AG04449 (cell line): ENCODE measurements at regions of chr12 and their contacts with region 1.

Region 1: DNA sequence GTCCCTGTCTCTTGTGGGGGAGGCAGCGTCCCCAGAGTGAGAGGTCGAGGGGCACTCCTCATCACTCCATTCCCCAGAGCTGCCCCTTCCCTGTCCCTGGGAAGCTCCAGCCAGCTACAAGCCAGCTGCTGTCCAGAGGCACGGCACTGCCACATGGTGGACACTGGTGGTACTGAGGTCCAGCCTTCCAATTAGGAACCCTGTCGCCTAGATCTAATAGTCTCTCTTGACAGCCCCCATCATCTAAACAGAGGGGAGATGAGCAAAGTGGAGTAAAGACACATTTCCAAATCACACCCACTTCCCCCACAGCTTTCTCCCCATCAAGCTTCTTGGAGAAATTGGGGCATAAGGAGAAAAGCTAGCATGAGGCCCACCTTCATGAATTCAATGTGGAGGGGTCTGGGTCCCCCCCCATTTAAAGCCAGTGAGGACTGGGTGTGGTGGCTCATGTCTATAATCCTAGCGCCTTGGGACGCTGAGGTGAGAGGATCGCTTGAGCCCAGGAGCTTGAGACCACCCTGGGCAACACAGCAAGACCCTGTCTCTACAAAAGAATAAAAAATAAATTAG is 2.1 kb upstream of the INHBE start:
- DNase-seq: no peak
- H3K4me3 ChIP-seq: no peak overlapping the region
- CTCF ChIP-seq: peak; percentile 94

Region 2: DNA sequence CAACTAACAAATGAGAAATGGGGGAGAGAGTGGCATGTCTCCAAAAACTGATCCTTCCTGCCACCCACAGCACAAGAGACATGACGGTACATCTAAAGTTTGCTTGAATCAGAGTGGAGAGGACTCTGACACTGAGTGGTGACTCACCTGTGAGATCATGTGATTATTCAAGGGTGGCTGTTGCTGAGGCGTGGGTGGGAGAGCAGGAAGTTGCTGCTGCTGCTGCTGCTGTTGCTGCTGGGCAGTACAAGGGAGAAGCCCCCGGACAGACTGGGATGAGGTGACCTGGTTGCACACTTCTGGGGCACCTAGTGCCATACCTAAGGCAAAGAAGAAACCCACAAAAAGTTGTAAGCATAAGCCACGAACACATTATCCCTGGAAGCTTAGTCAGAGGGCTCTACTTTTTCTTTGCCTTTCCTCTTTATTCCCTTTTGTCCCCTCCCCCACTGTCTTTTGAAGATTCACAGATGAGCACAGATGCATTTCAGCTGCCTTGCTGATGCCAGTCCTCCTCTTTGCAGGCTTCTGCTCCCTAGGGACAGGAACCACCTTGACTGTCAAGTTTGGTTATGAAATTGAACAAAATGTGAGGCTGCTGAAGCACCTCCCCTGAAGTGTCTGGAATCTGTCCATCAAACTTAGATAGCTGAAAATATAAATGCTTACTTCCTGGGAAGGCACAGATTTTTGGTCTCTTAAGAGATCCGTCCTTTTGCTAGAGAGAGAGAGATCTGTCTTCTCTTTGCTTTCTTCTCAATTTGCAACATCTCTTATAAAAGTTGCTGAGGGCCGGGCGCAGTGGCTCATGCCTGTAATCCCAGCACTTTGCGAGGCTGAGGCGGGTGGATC is 172.6 kb before region 1 on chr12:
- CTCF ChIA-PET with region 1: interaction called, 52 read pairs
- POLR2A ChIA-PET with region 1: no interaction called
- DNase-seq: peak; percentile 79
- H3K4me3 ChIP-seq: no peak overlapping the region
- CTCF ChIP-seq: no peak

Region 3: DNA sequence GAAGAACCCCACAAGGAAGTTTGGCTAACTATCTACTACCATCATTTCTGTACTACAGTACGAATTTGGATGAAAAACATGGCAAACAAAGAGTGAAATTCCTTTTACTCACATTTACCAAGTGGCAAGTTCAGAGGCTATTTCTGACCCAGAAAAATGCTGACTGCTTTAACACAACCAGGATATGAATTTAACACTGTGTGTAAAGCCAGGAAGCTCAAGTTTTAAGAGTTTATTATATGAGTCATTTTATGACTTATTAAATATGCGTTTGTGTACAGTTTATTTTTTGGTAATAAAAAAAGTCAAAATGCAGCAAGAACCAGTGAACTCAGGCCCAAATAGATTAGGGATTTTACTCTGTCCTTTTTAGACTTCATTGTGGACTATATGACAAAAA is 143.6 kb before region 1 on chr12:
- CTCF ChIA-PET with region 1: interaction called, 449 read pairs
- POLR2A ChIA-PET with region 1: interaction called, 6 read pairs
- DNase-seq: peak; percentile 9
- H3K4me3 ChIP-seq: no peak overlapping the region
- CTCF ChIP-seq: no peak

Region 4: GRCh38 chr12:57319678-57320469 is 133.1 kb before region 1 on chr12:
- CTCF ChIA-PET with region 1: interaction called, 33 read pairs
- POLR2A ChIA-PET with region 1: no interaction called
- DNase-seq: no peak
- H3K4me3 ChIP-seq: no peak overlapping the region
- CTCF ChIP-seq: no peak

Region 5: DNA sequence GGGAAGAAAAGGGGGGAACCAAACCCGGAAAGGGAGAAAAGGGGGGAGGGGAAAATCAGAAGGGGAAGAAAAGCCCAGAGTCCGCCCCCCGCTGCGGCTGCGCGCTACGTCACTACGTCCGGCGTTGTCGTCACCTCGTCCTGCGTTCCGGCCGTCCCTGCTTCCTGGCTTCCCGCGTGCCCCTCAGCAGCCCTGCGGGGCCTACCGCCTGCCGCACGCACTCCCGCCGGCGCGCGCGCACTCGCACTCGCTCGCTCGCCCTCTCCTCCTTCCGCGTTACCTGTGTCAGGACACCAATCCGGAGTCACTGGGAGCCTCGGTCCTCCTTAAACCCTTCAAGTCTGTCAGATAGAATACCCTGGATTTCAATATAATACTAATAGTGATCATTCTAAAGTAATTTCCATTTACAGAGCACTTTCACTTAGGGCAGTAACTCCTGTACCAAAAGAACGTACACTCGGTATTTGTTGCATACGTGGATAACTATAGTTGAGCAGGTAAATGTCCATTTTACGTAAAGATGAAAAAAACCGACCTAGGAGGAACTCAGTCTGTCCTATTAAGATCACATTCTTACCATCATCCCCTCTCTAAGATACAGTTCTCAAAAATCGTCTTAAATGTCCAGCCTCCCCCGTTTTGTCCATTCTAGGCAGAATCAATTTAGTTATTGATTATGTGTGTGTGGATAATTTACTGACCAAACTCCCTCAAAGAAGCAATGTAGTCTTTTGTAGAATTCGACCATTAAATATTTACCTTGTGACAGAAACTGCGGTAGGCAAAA is 21.9 kb before region 1 on chr12 and contains the start of gene R3HDM2:
- CTCF ChIA-PET with region 1: interaction called, 46 read pairs
- POLR2A ChIA-PET with region 1: interaction called, 5 read pairs
- DNase-seq: peak; percentile 57
- H3K4me3 ChIP-seq: peak within 1 kb of the TSS; percentile 65
- CTCF ChIP-seq: peak; percentile 22

Region 6: GRCh38 chr12:57441846-57442427 is 11.1 kb before region 1 on chr12:
- CTCF ChIA-PET with region 1: interaction called, 71 read pairs
- POLR2A ChIA-PET with region 1: no interaction called
- DNase-seq: no peak
- H3K4me3 ChIP-seq: no peak overlapping the region
- CTCF ChIP-seq: no peak

Region 7: DNA sequence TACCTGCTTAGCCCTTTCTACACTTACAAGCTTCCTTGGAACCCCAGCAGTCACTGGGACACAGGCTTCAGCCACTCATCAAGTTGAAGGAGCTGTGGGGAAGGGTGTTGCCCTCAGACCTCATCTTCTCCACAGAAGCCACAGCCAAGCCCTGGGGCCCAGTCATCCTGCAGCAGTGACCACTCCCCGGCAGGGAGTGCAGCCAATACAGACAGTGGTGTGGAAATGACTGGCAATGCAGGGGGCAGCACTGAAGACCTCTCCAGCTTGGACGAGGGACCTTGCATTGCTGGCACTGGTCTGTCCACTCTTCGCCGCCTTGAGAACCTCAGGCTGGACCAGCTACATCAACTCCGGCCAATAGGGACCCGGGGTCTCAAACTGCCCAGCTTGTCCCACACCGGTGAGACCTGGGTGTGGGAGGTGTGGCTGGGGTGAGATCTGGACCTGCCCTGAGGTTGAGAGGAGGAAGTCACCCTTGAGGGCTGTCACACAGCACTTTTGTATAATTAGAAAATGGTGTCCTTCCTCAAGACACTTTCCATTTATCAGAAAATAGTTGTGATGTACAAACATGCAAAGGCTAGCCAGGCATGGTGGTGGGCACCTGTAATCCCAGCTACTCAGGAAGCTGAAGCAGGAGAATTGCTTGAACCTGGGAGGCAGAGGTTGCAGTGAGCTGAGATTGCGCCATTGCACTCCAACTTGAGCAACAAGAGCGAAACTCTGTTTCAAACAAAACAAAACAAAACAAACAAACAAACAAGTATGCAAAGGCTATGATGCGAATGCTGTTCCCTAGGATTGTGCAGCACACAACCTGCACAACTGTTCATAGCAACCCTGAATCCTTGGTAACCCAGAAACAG is 16.5 kb after region 1 on chr12:
- CTCF ChIA-PET with region 1: interaction called, 321 read pairs
- POLR2A ChIA-PET with region 1: interaction called, 3 read pairs
- DNase-seq: no peak
- H3K4me3 ChIP-seq: no peak overlapping the region
- CTCF ChIP-seq: no peak

Region 8: GRCh38 chr12:57533108-57533507 is 80.1 kb after region 1 on chr12:
- CTCF ChIA-PET with region 1: no interaction called
- POLR2A ChIA-PET with region 1: no interaction called
- DNase-seq: no peak
- H3K4me3 ChIP-seq: no peak overlapping the region
- CTCF ChIP-seq: no peak

Region 9: DNA sequence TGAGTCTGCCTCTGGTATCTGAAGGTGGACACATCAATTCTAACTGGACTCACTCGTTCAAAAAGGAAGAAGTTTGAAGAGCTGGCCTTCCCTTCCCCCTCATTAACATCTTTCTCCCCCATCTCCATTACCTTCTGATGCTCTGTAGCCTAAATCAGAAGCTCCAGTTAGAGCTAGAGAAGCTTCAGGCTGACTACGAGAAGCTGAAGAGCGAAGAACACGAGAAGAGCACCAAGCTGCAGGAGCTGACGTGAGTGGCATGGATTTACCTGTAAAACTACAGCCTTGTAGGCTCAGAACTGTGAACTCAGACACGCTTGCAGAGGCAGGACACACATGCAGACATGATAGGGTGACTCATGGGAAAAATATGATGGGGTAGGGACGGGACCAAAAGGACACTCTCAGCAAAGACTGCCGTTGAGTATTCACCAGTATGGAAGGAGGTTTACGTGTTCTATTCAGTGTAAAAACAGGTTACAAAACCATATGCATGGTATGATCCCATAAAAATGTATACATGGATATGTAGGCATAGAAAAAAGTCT is 123.7 kb after region 1 on chr12:
- CTCF ChIA-PET with region 1: no interaction called
- POLR2A ChIA-PET with region 1: no interaction called
- DNase-seq: no peak
- H3K4me3 ChIP-seq: no peak overlapping the region
- CTCF ChIP-seq: no peak